Left cardiac atrium (tissue), 4 donors: ENCODE measurements at regions of chr2 and their contacts with region 1.

Region 1: GRCh38 chr2:201860636-201861066 is 54.3 kb downstream of the CDK15 start:
- DNase-seq: no peak
- ATAC-seq: peak; percentile 86 to 87

Region 2: DNA sequence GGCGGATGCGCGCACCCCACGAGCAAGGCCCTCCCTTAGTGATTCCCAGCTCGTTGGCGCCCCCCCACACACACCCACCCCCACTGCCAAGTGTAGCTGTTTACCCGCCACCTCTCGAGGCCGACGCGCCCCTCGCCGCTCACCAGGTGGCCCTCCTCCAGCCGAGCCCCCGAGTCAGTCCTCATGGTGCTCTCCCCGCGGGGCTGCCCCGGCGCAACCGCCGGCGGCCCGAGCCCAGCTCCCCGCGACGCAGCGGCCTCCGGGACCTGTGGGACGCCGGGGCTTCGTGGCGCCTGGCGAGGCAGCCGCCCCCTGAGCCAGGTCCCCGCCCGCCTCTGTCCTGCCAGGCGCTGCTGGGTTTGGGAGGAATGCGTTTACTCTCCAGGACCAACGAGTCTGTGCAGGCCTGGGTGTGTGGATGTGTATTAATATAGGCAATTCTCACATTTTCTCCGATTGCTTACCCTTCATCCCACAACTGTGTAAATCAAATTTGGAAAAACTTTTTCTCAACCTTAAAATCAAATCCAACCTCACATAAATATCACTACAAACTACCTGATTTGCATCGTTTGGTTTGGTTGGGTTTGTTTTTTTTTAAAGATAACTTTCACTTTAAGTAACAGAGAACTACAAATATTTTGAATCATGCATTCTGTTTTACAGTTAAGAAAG is 217.3 kb before region 1 on chr2 and contains the start of gene TMEM237:
- intact Hi-C with region 1: no loop called
- DNase-seq: peak; percentile 45
- ATAC-seq: peak; percentile 82 to 87
- total RNA-seq, gene TMEM237: 14.3 to 14.8 TPM

Region 3: GRCh38 chr2:202033321-202034248 is 172.9 kb after region 1 on chr2 and contains the start of gene FZD7:
- intact Hi-C with region 1: loop called in 1 of 2 experiments (anchors 5 kb)
- DNase-seq: peak; percentile 95
- ATAC-seq: peak; percentile 86 to 92
- total RNA-seq, gene FZD7: 12.2 to 18.9 TPM

Region 4: DNA sequence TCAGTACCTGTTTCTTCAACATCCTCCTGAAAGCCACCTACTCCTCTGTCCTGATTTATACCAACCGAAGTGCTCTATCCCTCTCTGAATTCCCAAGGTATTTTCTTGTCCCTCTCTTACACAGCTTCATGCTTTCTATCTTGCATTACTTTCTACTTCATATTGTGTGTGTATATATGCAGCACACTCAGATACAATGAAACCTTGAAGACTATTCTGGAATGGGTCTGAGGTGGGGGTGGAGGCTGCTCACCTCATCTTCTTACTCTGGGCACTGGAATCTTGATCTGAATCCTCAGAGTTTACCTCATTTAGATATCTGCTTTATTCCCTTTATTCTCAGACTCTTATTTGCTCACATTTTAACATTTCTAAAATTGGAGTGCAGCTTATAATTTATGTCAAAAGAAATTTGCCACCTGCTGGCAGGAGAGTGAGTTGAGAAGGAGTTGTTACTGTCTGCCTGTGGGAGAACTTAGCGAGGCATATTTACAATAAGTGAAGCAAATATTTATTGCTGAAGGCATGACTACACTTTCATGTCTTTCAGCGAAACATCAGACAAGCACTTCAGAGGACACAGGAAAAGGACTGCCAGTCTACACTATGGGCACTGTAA is 195.8 kb after region 1 on chr2:
- intact Hi-C with region 1: loop called (anchors 5 to 10 kb)
- DNase-seq: no peak
- ATAC-seq: no peak

Region 5: GRCh38 chr2:202178342-202178958 is 317.8 kb after region 1 on chr2:
- intact Hi-C with region 1: loop called (anchors 1 to 5 kb)
- DNase-seq: peak; percentile 47
- ATAC-seq: peak; percentile 82 to 86